ENCODE measurements at regions of chr7 and their contacts with region 1.

Region 1: GRCh38 chr7:123534383-123535260 is at the start of gene IQUB:
- DNase-seq: peak; percentile 98
- ATAC-seq: peak; percentile 97
- total RNA-seq, gene IQUB: 0.54 TPM

Region 2: DNA sequence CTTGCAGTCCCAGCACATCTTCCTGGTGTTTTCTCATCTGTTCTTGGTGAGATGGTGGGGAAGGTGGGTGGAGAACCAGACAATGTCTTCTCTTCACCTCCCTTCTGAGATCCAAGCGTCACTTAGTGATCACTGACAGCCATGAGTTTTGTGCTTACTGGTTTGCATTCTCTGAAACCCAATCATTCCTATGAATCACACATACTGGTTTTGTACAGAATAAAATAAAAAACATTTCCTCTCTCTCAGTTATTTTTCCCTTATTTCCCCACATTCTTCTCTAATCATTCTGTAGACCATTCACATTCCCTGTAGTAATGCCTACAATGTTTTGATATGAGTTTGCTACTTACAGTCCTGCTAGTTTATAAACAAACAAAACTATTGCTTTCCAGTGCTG is 191.0 kb before region 1 on chr7:
- intact Hi-C with region 1: no loop called
- DNase-seq: no peak
- ATAC-seq: no peak

Region 3: DNA sequence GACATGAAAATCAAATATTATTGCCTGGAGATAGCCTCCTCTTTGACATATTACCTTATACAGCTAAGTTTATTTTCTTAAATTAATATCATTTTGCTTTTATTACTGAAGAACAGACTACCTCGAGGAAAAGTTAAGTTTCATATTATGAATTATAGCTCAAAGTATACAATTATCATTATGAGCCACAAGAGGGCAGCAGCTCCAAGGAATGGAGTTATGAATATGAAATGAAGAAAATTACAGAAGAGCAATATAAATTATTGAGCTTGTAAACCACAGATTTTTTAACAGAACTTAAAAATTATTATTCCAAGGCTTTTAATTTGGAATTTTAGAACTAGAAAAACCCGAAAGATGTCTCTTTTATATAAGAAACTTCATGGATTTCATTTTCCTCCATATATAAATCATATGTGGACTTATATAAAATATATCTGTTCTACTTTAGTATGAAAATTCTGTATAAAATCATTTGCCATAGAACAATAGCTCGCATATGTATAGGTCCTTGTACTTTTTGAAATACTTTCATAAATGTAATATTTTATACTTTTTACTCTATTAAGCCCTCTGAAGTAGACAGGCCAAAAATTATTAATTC is 40.3 kb before region 1 on chr7:
- intact Hi-C with region 1: loop called (anchors 5 kb)
- DNase-seq: no peak
- ATAC-seq: no peak

Region 4: DNA sequence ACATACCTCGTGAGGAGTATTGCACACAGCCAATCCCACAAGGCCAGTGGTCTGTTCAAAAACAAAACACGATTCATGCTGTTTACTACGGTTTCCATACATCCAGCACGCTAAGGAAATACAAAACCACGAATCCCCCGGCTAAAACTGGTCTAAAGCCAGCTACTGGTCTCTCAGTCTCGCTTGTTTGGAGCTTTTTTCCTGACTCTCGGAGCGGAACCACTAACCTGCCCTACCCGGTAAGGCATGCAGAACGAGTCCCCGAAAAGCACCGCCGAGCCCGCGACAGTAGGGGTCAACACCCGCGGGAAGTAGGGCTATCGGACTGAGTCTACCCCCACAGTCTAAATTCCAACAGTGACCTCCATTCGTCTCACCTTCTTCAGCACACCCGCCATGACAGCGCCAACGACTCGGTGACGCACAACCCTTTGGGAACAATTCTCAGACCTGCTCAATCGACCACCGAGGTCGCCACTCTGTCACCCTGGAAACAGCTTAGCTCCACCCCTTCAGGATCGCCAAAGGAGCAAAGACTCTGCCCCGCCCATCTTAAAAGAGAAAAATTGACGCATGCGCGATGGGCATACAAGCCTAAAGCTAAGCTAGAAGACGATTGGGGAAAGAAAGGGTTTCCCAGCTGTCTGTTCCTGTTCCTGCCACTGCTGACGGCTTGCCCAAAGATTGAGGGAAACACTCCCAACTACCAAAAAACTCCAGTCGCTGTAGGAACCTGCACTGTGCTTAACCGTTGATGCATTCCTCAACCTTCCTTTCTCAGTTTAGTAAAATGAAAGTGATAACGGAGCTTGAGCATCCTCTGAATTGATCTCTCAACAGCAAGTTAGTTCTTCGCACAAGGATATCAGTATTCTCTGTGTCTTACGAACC is 23.0 kb after region 1 on chr7 and contains the start of gene NDUFA5:
- intact Hi-C with region 1: loop called (anchors 1 kb)
- DNase-seq: peak; percentile 95
- ATAC-seq: peak; percentile 99
- total RNA-seq, gene NDUFA5: 307 TPM

Measured in Right ventricle myocardium inferior (tissue), 1 donor.